Dendritic cell treated with granulocyte-macrophage colony-stimulating factor and Interleukin-4, amounts not matched to agents 40 ng/mL and 50 ng/mL, for 4 days (primary cell): ENCODE measurements at regions of chr11 and their contacts with region 1.

Region 1: GRCh38 chr11:66694732-66695207 is 17.1 kb upstream of the RBM4B start:
- H3K4me3 Mint-ChIP-seq: no peak overlapping the region
- H3K27ac Mint-ChIP-seq: no peak overlapping the region
- H3K4me1 Mint-ChIP-seq: no peaks in the 10 kb centered on the region
- H3K27me3 Mint-ChIP-seq: peaks cover 3% of the 10 kb centered on the region

Region 2: DNA sequence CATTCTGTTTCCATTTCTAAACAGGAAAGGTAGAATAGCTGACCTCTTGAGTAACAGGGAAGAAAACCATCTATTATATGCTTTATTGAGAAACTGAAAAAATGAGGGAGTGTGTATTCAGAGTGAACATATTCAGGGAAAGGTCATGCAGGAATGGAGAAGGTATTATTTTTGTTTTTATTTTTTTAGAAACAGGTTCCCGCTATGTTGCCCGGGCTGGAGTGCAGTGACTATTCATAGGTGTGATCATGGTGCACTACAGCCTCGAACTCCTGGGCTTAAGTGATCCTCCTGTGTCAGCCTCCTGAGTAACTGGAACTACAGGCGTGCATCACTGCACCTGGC is 139.7 kb after region 1 on chr11:
- intact Hi-C with region 1: loop called (anchors 1 kb)
- H3K4me3 Mint-ChIP-seq: no peak overlapping the region
- H3K27ac Mint-ChIP-seq: no peak overlapping the region
- H3K4me1 Mint-ChIP-seq: peaks cover 13% of the 10 kb centered on the region
- H3K27me3 Mint-ChIP-seq: no peaks in the 10 kb centered on the region

Region 3: GRCh38 chr11:66883016-66883968 is 188.5 kb after region 1 on chr11:
- intact Hi-C with region 1: loop called (anchors 1 kb)
- H3K4me3 Mint-ChIP-seq: no peak overlapping the region
- H3K27ac Mint-ChIP-seq: no peak overlapping the region
- H3K4me1 Mint-ChIP-seq: peaks cover 14% of the 10 kb centered on the region
- H3K27me3 Mint-ChIP-seq: peaks cover 6% of the 10 kb centered on the region

Region 4: DNA sequence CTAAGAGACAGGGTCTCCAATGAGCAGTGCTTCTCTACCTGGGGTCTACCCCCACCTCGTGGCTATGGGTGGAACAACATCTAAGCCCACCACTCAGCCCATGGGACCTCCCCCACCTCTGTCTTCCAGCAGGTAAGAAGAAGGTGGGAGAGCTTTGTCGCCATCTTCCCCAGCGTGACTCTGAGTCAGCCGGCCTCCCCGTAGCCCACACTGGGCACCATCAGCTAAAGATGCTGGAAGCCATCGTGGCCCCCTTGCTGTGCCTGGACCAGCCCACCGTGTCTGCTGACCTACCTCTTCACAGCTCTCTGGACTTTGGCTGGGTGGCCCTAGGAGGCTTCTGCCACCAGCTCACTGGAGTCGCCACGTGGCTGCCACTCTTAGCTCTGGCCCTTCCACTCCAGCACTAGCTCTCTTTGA is 281.3 kb after region 1 on chr11:
- intact Hi-C with region 1: loop called (anchors 10 kb)
- H3K4me3 Mint-ChIP-seq: no peak overlapping the region
- H3K27ac Mint-ChIP-seq: no peak overlapping the region
- H3K4me1 Mint-ChIP-seq: peaks cover 5% of the 10 kb centered on the region
- H3K27me3 Mint-ChIP-seq: peaks cover 33% of the 10 kb centered on the region